ENCODE measurements at regions of chr9 and their contacts with region 1.

Region 1: GRCh38 chr9:83920927-83921707 is at the start of gene KIF27:
- DNase-seq: peak; percentile 96
- H3K4me3 ChIP-seq: peak within 1 kb of the TSS; percentile 54 to 81
- H3K27ac ChIP-seq: peak within 1 kb of the TSS; percentile 85 to 88
- H3K4me1 ChIP-seq: peaks cover 3 to 7% of the 10 kb centered on the region in 2 experiments; a peak in 3 of 4 replicates
- H3K27me3 ChIP-seq: no peaks in the 10 kb centered on the region
- CTCF ChIP-seq: peak; percentile 38; the same call in 1 of the 2 replicates
- EP300 ChIP-seq: no peak
- RAD21 ChIP-seq: no peak
- polyA plus RNA-seq, gene KIF27: 0.78 and 0.81 TPM in 2 replicates

Region 2: GRCh38 chr9:83937911-83938323 is 16.8 kb after region 1 on chr9:
- CTCF ChIA-PET with region 1: interaction called, 12 read pairs
- POLR2A ChIA-PET with region 1: no interaction called
- DNase-seq: peak; percentile 54
- H3K4me3 ChIP-seq: no peak overlapping the region
- H3K27ac ChIP-seq: no peak overlapping the region
- H3K4me1 ChIP-seq: peaks cover 2 to 32% of the 10 kb centered on the region in 2 experiments; a peak in 2 of 4 replicates
- H3K27me3 ChIP-seq: no peaks in the 10 kb centered on the region
- CTCF ChIP-seq: peak; percentile 73
- EP300 ChIP-seq: no peak
- RAD21 ChIP-seq: peak; percentile 92

Region 3: GRCh38 chr9:83980395-83981125 is 59.4 kb after region 1 on chr9 and contains the start of gene RMI1:
- CTCF ChIA-PET with region 1: no interaction called
- POLR2A ChIA-PET with region 1: interaction called, 14 read pairs
- DNase-seq: peak; percentile 95
- H3K4me3 ChIP-seq: peak within 1 kb of the TSS; percentile 97 to 99
- H3K27ac ChIP-seq: peak within 1 kb of the TSS; percentile 95 to 99
- H3K4me1 ChIP-seq: peaks cover 6 to 13% of the 10 kb centered on the region in 2 experiments; a peak in 3 of 4 replicates
- H3K27me3 ChIP-seq: no peaks in the 10 kb centered on the region
- CTCF ChIP-seq: peak; percentile 30; the same call in 1 of the 2 replicates
- EP300 ChIP-seq: peak; percentile 24 to 62
- RAD21 ChIP-seq: no peak
- polyA plus RNA-seq, gene RMI1: 0.96 and 1.0 TPM in 2 replicates

Region 4: DNA sequence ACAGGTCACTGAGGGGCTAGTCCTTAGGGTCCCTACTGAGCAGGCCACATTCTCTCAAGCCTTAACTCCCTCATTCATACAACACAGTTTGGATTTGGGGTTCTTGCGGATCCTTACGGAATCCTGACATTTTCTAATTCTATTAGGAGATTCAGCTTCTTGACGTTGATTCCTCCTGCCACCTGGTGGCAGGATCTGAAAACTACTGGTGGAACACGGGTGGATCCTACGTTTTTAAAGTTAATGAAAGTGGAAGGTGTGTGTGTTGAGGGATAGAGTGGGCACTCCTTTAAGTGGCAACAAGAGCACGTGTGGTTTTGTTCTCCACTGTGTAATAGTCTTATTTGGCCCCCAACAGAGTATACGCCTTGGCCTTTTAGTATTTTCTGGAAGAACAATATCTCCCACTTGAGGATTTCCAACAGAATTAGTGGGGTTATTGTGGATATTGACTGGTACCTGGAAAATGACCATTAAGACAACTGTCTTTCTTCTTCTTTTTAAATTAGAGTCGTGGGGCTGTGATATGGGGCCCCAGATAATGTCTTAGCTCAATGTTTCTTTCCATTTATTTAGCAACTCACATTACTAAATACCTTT is 394.3 kb after region 1 on chr9:
- CTCF ChIA-PET with region 1: interaction called, 11 read pairs
- POLR2A ChIA-PET with region 1: no interaction called
- DNase-seq: peak; percentile 53
- H3K4me3 ChIP-seq: peak overlapping the region in 1 of 2 experiments; percentile 38; a peak in 1 of 4 replicates
- H3K27ac ChIP-seq: no peak overlapping the region
- H3K4me1 ChIP-seq: no peaks in the 10 kb centered on the region
- H3K27me3 ChIP-seq: no peaks in the 10 kb centered on the region
- CTCF ChIP-seq: peak; percentile 88
- EP300 ChIP-seq: no peak
- RAD21 ChIP-seq: peak; percentile 82

Measured in SK-N-SH (cell line).